Kidney (tissue), 22 donors: ENCODE measurements at regions of chr1 and their contacts with region 1.

Region 1: DNA sequence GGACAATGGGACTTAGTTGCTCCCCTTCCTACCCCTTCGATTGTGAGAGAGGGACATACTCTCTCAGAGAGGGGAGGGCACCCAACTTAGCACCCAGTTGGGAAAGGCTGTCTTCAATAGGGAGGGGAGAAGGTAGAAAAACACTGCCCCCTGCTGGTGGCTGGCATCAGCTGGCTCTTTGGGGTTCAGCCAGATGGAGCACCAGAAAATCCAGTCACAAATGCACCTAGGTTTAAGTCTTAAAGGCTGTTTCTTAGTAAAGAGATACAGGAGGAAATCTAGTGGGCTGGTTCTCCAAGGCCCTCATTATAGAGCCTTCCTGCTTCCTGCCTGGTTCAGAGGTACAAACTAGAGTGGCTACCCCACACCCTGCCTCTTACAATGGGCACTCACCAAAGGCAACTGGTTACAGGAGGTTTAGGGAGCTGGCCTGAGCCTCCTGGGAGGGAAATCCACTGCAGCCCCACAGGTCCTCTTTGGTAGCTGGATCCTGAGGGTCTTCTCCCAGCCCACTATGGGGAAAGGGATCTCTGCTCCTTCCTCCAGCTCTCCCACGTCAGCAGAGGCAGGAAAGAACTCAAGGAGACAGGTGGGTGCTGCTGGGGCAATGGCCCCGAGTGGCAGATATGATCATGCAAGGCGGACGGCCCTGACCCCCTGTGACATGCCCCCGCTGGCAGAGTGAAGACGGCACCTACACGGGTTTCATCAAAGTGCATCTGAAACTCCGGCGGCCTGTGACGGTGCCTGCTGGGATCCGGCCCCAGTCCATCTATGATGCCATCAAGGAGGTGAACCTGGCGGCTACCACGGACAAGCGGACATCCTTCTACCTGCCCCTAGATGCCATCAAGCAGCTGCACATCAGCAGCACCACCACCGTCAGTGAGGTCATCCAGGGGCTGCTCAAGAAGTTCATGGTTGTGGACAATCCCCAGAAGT is 28.3 kb downstream of the EIF2D start:
- DNase-seq: peak; percentile 61 to 83 (median 72)
- H3K4me3 ChIP-seq: no peak overlapping the region
- H3K27ac ChIP-seq: no peak overlapping the region
- H3K4me1 ChIP-seq: no peaks in the 10 kb centered on the region
- H3K27me3 ChIP-seq: no peaks in the 10 kb centered on the region
- CTCF ChIP-seq: peak; percentile 86

Region 2: DNA sequence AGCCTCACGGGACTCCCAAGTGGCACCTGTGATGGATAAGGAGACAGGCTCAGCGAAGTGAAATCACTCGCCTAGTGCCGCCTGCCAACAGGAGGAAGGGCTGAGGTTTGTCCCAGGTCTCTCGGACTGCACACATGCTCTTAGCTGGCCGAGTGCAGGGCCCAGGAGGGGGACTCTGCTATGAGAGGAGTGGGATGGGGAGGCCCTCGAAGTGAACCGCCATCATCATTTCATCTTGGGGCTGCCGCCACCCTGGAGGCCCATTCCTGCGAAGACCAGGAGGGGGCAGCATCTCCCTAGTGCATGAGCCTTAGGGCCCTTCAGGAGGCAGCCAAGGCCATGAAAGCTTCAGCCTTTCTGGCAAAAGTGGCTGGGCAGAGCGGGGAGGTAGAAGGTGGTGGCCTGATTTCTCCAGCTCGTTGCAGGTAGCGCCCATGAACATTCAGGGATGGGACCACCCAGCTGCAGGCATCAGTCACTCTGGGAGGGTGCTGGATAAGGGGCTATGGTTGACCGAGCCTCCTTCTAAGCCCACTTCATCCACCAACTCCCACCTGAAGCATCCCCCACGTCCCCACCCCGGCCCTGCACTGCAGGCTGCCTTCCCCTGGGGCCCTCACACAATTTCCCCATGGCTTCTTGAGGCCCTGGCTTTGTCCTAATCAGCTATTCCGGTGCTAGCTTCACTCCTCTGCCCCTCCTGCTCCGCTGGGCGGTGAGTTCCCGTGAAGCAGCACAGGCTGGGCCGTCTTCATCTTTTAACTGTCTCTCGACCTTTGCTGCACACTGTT is 93.8 kb before region 1 on chr1:
- intact Hi-C with region 1: loop called (anchors 5 kb)
- DNase-seq: peak; percentile 83 to 89 (median 88)
- H3K4me3 ChIP-seq: no peak overlapping the region
- H3K27ac ChIP-seq: no peak overlapping the region
- H3K4me1 ChIP-seq: peaks cover 0 to 19% (median 0%) of the 10 kb centered on the region in 3 donors
- H3K27me3 ChIP-seq: no peaks in the 10 kb centered on the region
- CTCF ChIP-seq: peak; percentile 96

Region 3: GRCh38 chr1:206544562-206545257 is 39.3 kb before region 1 on chr1:
- intact Hi-C with region 1: loop called (anchors 5 kb)
- DNase-seq: peak; percentile 80 to 88 (median 82)
- H3K4me3 ChIP-seq: no peak overlapping the region
- H3K27ac ChIP-seq: no peak overlapping the region
- H3K4me1 ChIP-seq: peaks cover 0 to 4% (median 0%) of the 10 kb centered on the region in 3 donors
- H3K27me3 ChIP-seq: no peaks in the 10 kb centered on the region
- CTCF ChIP-seq: peak; percentile 89

Region 4: GRCh38 chr1:206646504-206646903 is 62.5 kb after region 1 on chr1:
- intact Hi-C with region 1: no loop called
- DNase-seq: no peak
- H3K4me3 ChIP-seq: no peak overlapping the region
- H3K27ac ChIP-seq: no peak overlapping the region
- H3K4me1 ChIP-seq: no peaks in the 10 kb centered on the region
- H3K27me3 ChIP-seq: no peaks in the 10 kb centered on the region
- CTCF ChIP-seq: no peak